ENCODE measurements at regions of chr19 and their contacts with region 1.

Region 1: GRCh38 chr19:33778089-33778791 is 18.4 kb upstream of the KCTD15 start:
- DNase-seq: peak; percentile 89
- H3K4me3 Mint-ChIP-seq: no peak overlapping the region
- H3K27ac Mint-ChIP-seq: no peak overlapping the region
- H3K4me1 Mint-ChIP-seq: peaks cover 5% of the 10 kb centered on the region
- H3K27me3 Mint-ChIP-seq: peaks cover 14% of the 10 kb centered on the region

Region 2: DNA sequence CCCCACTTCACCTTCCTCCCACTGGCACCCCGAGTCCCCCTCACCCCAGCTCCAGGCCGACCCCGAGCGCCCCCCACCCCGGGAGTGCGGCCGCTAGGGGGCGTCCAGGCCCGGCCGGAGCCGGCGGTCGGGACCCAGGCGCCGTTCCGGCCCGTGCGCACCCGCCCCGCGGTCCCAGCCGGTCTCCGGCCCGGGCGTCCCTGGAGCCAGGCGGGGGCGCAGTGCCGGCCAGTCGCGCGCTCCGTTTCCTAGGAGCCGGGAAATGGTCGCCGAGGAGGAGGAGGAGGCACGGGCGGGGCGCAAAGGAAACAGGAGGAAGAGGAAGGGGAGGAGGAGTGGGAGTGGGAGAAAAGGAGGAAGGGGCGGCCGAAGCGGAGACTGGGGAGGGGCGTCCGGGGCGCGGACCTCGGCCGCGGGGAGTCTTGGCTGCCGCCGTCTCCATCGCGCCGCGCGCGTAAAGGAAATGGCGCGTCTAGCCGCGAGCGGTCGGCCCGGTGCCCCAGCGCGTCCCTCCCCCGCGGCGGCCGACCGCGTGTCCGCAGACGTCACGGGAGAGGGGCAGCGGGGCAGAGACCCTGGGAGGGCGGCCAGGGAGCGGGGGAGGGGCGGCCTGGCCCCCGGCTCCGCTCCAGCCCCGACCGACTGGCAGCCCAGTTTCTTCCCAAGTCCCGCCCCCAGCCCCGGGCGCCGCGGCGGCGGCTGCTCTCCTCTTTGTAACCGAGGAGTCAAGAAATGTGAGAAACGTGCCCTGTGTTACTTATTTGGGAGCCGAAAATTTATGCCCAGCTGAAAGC is 17.3 kb after region 1 on chr19:
- CTCF ChIA-PET with region 1: interaction called, 68 read pairs
- POLR2A ChIA-PET with region 1: interaction called, 3 read pairs
- intact Hi-C with region 1: no loop called
- DNase-seq: peak; percentile 68
- H3K4me3 Mint-ChIP-seq: peak overlapping the region; percentile 71
- H3K27ac Mint-ChIP-seq: peak overlapping the region; percentile 72
- H3K4me1 Mint-ChIP-seq: peaks cover 2% of the 10 kb centered on the region
- H3K27me3 Mint-ChIP-seq: peaks cover 9% of the 10 kb centered on the region

Region 3: DNA sequence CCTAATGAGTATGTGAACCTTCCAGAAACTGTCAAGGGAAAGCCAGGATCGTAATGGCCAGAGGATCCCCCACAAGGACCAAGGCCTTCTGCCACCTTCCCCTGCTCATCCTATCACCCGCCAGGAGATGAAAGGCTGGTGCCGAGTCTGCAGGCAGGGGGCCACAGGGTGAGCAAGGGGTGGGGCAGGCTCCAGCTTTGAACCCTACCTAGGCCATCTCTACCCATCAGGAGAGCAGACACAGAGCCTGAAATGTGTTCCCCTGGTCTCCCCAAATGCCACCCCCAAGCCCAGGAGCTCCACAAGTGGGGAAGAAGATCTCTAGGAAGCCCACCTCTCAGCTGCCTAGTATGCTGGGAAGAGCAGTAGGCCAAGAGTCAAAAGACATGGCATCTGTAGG is 113.5 kb after region 1 on chr19:
- CTCF ChIA-PET with region 1: interaction called, 15 read pairs
- POLR2A ChIA-PET with region 1: no interaction called
- intact Hi-C with region 1: no loop called
- DNase-seq: no peak
- H3K4me3 Mint-ChIP-seq: no peak overlapping the region
- H3K27ac Mint-ChIP-seq: no peak overlapping the region
- H3K4me1 Mint-ChIP-seq: no peaks in the 10 kb centered on the region
- H3K27me3 Mint-ChIP-seq: peaks cover 7% of the 10 kb centered on the region

Region 4: GRCh38 chr19:34096020-34096915 is 318.0 kb after region 1 on chr19:
- CTCF ChIA-PET with region 1: interaction called, 106 read pairs
- POLR2A ChIA-PET with region 1: no interaction called
- intact Hi-C with region 1: loop called (anchors 1 kb)
- DNase-seq: no peak
- H3K4me3 Mint-ChIP-seq: no peak overlapping the region
- H3K27ac Mint-ChIP-seq: no peak overlapping the region
- H3K4me1 Mint-ChIP-seq: peaks cover 2% of the 10 kb centered on the region
- H3K27me3 Mint-ChIP-seq: peaks cover 6% of the 10 kb centered on the region

Region 5: DNA sequence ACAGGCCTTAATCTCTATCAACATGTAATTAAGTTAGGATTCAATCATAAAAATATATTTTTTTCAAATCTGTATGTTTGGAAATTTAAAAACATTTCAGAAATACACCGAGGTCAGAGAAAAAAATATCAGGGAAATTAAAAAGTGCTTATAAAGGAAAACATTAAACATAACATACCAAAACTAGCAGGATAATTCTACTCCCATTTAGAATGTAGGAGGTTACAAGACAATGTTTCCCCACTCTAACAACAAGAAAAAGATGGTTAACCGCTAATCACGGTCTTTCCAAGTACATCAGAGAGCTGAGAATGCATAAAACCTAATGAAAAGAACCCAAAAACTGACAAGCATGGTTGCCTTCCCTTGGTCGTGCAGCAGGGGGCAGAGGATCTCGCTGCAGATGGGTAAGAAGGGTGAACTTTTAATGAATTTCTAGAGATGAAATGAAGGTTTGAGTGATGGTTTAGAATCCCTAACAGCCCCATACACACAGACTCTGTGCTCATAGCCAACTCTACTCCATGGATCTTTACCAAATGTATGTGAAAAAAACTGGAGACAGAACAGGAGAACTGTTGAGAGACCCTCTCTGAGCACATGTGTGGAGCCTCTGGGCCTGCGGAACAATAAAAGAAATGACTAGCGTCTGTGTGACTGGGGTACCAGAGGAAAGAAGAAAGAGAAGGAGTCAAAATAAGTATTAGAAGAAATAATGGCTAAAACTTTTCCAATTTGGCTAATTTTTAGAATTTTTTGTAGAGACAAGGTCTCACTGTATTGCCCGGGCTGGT is 342.8 kb after region 1 on chr19:
- CTCF ChIA-PET with region 1: interaction called, 10 read pairs
- POLR2A ChIA-PET with region 1: no interaction called
- intact Hi-C with region 1: no loop called
- DNase-seq: peak; percentile 73
- H3K4me3 Mint-ChIP-seq: no peak overlapping the region
- H3K27ac Mint-ChIP-seq: no peak overlapping the region
- H3K4me1 Mint-ChIP-seq: peaks cover 13% of the 10 kb centered on the region
- H3K27me3 Mint-ChIP-seq: peaks cover 5% of the 10 kb centered on the region